ENCODE measurements at regions of chr7 and their contacts with region 1.

Region 1: GRCh38 chr7:102279537-102280400 is 6.9 kb upstream of the SH2B2 start:
- DNase-seq: peak; percentile 41
- H3K4me3 Mint-ChIP-seq: no peak overlapping the region
- H3K27ac Mint-ChIP-seq: no peak overlapping the region
- H3K4me1 Mint-ChIP-seq: peaks cover 6% of the 10 kb centered on the region
- H3K27me3 Mint-ChIP-seq: peaks cover 8% of the 10 kb centered on the region

Region 2: DNA sequence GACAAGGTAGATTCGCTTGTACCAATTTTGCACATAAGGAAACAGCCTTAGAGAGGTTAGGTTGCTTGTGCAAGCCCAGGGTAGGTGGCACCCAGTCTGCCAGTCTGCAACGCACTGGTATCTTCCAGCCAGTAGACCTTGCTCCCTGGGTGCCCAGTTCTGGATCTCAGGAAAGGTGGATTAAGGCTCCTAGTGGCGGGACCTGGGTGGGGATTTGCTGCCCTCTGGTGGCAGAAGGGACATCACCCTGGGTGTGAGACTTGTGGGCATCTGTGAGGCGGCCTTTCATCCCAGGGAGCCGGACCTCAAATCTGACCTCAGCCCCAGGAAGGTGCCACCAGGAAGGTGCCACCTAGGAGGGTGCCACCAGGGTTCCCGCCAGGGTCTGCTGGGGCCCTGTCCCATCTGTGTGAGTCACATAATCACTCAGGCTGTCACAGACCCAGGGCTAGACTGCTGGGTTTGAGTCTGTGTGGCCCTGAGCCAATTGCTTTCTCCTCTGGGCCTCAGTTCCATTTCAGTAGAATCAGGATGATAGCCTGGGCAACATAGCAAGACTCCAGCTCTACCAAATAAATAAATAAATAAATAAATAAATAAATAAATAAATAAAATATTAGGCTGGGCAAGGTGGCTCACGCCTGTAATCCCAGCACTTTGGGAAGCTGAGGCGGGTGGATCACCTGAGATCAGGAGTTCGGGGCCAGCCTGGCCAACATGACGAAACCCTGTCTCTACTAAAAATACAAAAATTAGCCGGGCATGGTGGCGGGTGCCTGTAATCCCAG is 111.1 kb after region 1 on chr7:
- intact Hi-C with region 1: loop called (anchors 1 kb)
- DNase-seq: peak; percentile 57
- H3K4me3 Mint-ChIP-seq: no peak overlapping the region
- H3K27ac Mint-ChIP-seq: no peak overlapping the region
- H3K4me1 Mint-ChIP-seq: peaks cover 6% of the 10 kb centered on the region
- H3K27me3 Mint-ChIP-seq: no peaks in the 10 kb centered on the region